Activated T-helper 1 cell treated with anti-CD3 and anti-CD28 coated beads, Interleukin-12 subunit alpha, Interleukin-12 subunit beta, Interleukin-2, Interleukin-4 antibody, amounts not matched to agents 30 ng/mL and 10 ng/mL and 1 ng/mL, durations not matched to agents 14 hours and 24 hours and 36 hours (primary cell): ENCODE measurements at regions of chr16 and their contacts with region 1.

Region 1: DNA sequence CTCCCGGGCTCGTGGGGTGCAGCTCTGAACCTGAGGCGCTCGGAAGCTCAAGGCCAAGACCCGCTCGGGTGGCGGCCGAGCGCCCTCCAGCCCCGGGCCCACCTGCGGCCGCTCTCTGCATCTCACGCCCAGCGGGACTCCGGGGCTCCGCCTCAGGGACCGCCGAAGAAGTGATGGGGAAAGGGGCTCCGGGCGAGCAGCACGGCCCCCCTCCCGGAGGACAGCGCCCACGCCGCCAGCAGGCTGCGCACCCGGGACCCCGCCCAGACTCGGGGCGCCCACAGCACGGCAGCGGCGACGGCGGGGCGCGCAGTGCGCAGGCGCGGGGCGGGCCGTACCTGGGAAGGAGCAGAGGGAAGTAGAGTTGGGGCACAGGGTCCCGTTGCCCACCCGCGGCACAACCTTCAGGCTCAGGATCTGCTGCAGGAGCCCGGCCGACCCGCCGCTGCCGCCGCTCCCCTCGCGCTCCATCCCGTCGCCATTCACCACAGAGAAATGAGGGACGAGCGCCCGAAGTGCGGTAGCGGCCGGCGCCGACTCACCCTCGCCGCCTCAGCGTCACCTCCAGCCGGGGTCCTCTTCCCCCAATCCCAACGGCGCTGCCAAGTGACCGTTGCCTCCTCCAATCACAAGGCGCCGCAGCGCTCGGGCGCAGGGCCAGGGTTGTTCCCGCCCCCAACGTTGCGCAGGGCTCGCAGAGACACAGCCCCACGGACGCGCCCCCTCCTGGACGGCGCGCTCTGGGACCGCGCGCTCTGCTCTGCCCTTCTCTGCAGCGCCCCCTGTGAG is at the start of gene TMEM170A:
- DNase-seq: peak; percentile 99
- H3K4me3 Mint-ChIP-seq: peak within 1 kb of the TSS; percentile 94
- H3K27ac Mint-ChIP-seq: peak within 1 kb of the TSS; percentile 95
- H3K4me1 Mint-ChIP-seq: peaks cover 45% of the 10 kb centered on the region
- H3K27me3 Mint-ChIP-seq: peaks cover 7% of the 10 kb centered on the region
- total RNA-seq, gene TMEM170A: 42.1 and 42.7 TPM in 2 replicates

Region 2: DNA sequence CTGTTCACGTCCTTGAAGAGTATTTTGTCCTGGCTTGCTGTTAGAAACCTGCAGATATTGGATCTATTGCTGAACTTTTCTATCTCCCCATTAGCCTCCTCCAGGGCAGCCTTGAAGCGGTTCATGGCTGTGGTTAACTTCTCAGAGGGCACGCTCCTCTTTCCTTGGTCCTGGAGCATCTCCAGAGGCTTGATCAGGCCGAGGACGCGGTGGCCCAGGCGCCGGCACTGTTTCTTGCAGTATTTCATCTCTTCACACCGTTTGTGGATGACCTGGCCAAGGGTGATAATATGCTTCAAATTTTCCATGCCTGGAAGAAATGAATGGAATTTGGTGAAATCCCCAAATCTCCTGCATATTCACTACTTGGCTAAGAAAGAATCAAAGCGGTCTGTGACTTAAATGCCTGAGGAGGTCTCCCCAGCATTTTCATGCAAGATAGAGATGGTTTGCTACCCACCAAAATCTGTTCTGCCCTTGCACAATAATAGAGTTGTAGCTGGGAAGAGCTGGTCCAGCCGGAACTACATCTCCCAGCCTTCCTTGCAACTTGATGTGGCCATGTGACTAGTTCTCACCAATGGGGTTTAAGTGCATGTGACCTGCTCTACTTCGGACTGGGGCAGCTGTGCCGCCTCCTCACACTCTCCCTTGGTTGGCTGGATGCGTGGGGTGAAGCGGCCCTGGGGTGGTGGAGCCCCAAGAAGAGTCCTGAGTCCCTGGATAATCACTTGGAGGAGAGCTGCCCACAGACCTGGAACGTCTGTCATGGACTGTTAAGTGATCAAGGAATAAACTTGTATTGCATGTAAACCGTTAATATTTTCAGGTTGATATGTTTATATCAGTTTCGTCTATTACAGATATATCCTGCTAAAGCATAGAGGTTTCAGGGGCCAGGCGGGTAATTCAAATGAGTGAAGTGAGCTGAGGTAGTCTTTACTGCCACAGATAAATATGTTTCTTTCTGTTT is 768.6 kb before region 1 on chr16:
- intact Hi-C with region 1: loop called (anchors 2 kb)
- DNase-seq: peak; percentile 66
- H3K4me3 Mint-ChIP-seq: peak overlapping the region; percentile 84
- H3K27ac Mint-ChIP-seq: peak overlapping the region; percentile 70
- H3K4me1 Mint-ChIP-seq: peaks cover 50% of the 10 kb centered on the region
- H3K27me3 Mint-ChIP-seq: no peaks in the 10 kb centered on the region

Region 3: GRCh38 chr16:75379911-75380847 is 84.1 kb before region 1 on chr16:
- intact Hi-C with region 1: loop called (anchors 2 kb)
- DNase-seq: peak; percentile 21
- H3K4me3 Mint-ChIP-seq: peak overlapping the region; percentile 41
- H3K27ac Mint-ChIP-seq: peak overlapping the region; percentile 36
- H3K4me1 Mint-ChIP-seq: peaks cover 27% of the 10 kb centered on the region
- H3K27me3 Mint-ChIP-seq: peaks cover 40% of the 10 kb centered on the region

Region 4: GRCh38 chr16:75452464-75453190 is 11.7 kb before region 1 on chr16:
- intact Hi-C with region 1: loop called (anchors 1 kb)
- DNase-seq: no peak
- H3K4me3 Mint-ChIP-seq: no peak overlapping the region
- H3K27ac Mint-ChIP-seq: no peak overlapping the region
- H3K4me1 Mint-ChIP-seq: no peaks in the 10 kb centered on the region
- H3K27me3 Mint-ChIP-seq: no peaks in the 10 kb centered on the region

Region 5: DNA sequence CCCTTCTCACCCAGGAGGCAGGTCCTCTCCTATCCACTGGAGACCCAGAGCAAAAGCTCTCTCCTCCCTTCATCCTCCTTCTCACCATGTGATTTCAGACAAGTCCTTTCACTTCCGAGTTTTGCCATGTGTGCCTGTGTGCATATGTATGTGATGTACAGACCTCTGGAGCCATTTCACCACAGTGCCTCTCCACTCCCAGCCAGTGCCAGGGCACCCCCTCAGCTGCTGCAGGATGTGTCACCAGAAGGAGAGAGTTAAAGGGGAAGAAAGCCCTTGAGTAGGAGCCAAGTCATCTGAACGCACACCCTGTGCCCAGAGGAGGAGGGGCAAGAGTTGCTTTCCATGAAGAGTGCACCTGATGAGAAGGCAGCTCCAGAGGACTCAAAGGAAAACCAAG is 13.8 kb after region 1 on chr16:
- intact Hi-C with region 1: no loop called
- DNase-seq: no peak
- H3K4me3 Mint-ChIP-seq: no peak overlapping the region
- H3K27ac Mint-ChIP-seq: no peak overlapping the region
- H3K4me1 Mint-ChIP-seq: no peaks in the 10 kb centered on the region
- H3K27me3 Mint-ChIP-seq: peaks cover 2% of the 10 kb centered on the region

Region 6: DNA sequence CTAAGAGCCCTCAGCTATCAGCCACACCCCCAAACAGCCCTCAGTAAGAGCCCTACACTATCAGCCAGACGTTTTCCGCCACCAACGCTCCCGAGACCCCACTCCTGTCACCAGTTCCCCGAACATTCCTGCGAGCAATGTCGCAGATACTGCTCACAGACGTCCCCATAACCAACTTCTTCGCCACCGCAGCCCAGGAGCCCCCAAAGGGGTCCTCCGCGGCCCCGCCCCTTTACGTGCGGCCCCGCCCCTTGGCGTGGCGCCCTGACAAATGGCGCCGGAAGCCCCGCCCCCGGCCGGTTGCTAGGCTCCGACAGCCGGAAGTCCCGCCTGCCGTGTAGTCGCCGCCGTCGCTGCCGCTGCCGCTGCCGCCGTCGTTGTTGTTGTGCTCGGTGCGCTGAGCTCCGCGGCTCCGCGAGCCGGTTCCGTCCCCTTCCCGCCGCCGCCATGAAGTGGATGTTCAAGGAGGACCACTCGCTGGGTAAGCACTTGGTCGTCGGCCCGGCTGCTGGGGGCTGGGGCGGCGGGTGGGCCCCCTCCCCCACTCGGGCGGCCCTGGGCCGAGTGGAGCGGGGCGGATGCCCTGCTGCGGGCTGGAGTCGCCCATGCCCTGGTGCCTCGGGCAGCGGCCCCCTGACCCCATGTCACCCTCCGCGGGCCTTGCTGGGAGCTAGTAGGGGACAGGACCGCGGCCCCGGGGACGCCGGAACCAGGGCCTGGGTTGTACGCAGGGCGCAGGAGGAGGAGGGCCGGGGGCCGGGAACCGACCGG is 101.9 kb after region 1 on chr16 and contains the start of gene GABARAPL2:
- intact Hi-C with region 1: loop called (anchors 1 kb)
- DNase-seq: peak; percentile 87
- H3K4me3 Mint-ChIP-seq: peak within 1 kb of the TSS; percentile 99
- H3K27ac Mint-ChIP-seq: peak within 1 kb of the TSS; percentile 90
- H3K4me1 Mint-ChIP-seq: peaks cover 28% of the 10 kb centered on the region
- H3K27me3 Mint-ChIP-seq: peaks cover 5% of the 10 kb centered on the region
- total RNA-seq, gene GABARAPL2: 62.7 and 69.5 TPM in 2 replicates

Region 7: GRCh38 chr16:77190478-77191258 is 1726.3 kb after region 1 on chr16 and contains the start of gene MON1B:
- intact Hi-C with region 1: loop called (anchors 1 kb)
- DNase-seq: peak; percentile 93
- H3K4me3 Mint-ChIP-seq: peak within 1 kb of the TSS; percentile 97
- H3K27ac Mint-ChIP-seq: peak within 1 kb of the TSS; percentile 100
- H3K4me1 Mint-ChIP-seq: peaks cover 39% of the 10 kb centered on the region
- H3K27me3 Mint-ChIP-seq: peaks cover 4% of the 10 kb centered on the region
- total RNA-seq, gene MON1B: 66.2 and 70.1 TPM in 2 replicates